Natural killer cell (primary cell): ENCODE measurements at regions of chr3 and their contacts with region 1.

Region 1: DNA sequence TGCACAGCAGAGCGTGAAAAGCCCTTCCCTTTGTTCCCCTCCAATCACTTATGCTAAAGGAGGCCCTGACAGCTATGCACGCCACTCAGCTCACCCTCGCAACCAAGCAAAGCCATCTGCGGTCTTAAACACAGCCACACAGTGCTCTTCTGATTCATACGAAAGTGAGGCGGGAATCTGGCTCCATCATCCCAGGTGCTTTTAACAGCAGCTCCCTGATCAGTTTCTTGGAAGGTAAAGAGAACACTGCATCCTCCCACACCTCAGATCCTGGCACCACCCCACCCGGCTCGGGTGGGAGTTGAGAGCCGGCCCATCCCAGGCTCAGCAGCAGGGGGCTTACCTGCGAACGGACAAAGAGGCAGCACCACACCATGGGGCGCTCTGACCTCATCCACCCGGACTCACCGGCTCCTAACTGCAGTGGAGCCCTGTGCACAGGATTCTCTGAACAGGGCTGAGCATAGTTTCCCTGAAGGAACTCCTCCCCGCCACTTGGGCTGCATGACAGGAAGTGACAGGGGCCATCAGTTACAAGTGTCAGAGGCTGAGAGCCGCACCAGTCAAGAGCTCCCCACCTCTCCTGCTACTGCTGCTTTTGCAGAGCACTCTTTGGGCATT is 114.3 kb upstream of the ARHGEF3 start:
- DNase-seq: peak; percentile 54 to 86
- ATAC-seq: peak; percentile 93 to 95 (median 93)
- H3K4me3 ChIP-seq: peak overlapping the region; percentile 60
- H3K4me3 Mint-ChIP-seq: peak overlapping the region; percentile 86
- H3K27ac ChIP-seq: peak overlapping the region; percentile 75
- H3K27ac Mint-ChIP-seq: peak overlapping the region; percentile 80 to 85
- H3K4me1 ChIP-seq: peaks cover 39% of the 10 kb centered on the region
- H3K4me1 Mint-ChIP-seq: peaks cover 46 to 57% of the 10 kb centered on the region in 2 donors
- H3K27me3 ChIP-seq: no peaks in the 10 kb centered on the region
- H3K27me3 Mint-ChIP-seq: no peaks in the 10 kb centered on the region
- CTCF ChIP-seq: no peak

Region 2: DNA sequence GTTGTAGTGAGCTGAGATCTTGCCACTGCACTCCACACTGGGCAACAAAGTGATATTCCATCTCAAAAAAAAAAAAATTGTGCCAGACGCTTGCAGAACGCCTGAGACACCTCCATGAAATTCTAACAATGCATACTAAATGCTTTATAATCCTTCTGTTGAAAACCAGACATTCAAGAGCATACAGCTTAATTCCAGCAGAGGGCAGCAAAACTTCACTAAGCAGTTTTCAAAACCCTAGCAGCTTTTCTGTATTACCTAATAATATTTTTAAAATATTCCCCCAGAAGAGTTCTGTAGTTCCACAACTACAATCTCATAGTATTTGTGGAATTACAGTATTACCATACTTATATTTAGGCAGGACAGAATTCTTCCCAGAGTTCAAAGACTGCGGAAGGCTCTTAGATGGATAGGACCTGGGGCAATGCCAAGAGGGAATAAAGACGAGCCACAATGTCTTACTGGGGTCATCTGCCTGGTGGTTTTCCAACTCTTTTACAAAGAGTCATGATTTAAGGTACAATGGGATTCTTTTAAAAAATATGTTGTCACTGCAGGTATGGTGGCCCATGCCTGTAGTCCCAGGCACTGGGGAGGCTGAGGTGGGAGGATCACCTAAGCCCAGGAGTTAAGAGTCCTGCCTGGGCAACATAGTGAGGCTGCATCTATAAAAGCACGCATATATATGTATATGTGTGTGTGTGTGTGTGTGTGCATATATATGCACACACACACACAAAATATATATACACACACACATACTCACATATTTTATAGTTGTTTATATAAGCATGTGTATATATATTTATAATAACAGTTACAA is 213.4 kb before region 1 on chr3:
- intact Hi-C with region 1: loop called (anchors 5 kb)
- DNase-seq: peak in 1 of 2 donors; percentile 89
- ATAC-seq: peak; percentile 77 to 83 (median 82)
- H3K4me3 ChIP-seq: no peak overlapping the region
- H3K4me3 Mint-ChIP-seq: no peak overlapping the region
- H3K27ac ChIP-seq: no peak overlapping the region
- H3K27ac Mint-ChIP-seq: peak overlapping the region in 1 of 2 donors; percentile 50
- H3K4me1 ChIP-seq: peaks cover 12% of the 10 kb centered on the region
- H3K4me1 Mint-ChIP-seq: peaks cover 16% of the 10 kb centered on the region in 2 donors
- H3K27me3 ChIP-seq: no peaks in the 10 kb centered on the region
- H3K27me3 Mint-ChIP-seq: no peaks in the 10 kb centered on the region
- CTCF ChIP-seq: peak; percentile 89

Region 3: DNA sequence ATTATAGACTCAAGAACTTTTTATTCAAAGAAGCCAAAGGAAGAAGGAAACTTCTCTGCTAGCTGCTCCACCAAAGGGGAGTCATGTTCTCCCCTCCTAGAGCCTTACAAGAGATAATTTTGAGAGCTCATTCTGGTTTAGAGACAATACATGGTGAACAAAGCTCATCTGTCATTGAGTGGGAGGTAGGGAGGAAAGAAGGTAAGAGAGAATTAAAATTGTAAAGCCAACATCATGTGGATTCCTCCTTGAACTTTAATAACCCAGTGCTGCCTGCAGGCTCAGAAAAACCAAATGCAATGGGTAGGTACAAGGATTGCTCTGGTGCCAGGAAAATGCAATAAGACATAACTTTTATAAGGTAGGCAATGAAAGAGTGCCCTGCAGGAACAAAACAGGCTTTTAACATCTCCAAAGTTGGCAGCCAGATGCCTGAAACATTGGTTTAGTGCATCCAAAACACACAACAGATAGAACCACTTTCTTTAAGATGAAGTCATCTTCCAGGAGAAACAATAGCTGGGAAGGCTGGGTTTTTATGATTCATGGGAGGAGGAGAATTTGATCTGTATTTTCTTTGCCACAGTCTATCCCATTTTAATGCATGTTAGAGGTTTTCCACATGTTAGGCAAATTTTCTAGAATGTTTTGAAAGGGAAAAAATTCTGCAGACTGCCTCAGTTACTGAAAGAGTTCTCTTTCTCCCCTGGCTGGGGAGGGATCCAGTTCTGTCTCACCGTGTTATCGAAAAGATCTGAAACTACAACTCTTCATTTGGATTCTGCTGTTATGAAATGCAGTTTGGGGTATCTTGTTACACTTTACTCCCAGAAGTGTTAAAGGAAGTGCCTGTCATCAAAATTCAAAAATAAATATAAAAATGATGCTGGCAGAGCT is 103.1 kb before region 1 on chr3:
- intact Hi-C with region 1: no loop called
- DNase-seq: no peak
- ATAC-seq: no peak
- H3K4me3 ChIP-seq: no peak overlapping the region
- H3K4me3 Mint-ChIP-seq: no peak overlapping the region
- H3K27ac ChIP-seq: no peak overlapping the region
- H3K27ac Mint-ChIP-seq: peak overlapping the region; percentile 48 to 69
- H3K4me1 ChIP-seq: peaks cover 6% of the 10 kb centered on the region
- H3K4me1 Mint-ChIP-seq: peaks cover 41 to 52% of the 10 kb centered on the region in 2 donors
- H3K27me3 ChIP-seq: no peaks in the 10 kb centered on the region
- H3K27me3 Mint-ChIP-seq: no peaks in the 10 kb centered on the region
- CTCF ChIP-seq: no peak

Region 4: GRCh38 chr3:56825567-56826438 is 90.3 kb before region 1 on chr3:
- intact Hi-C with region 1: no loop called
- DNase-seq: no peak
- ATAC-seq: no peak
- H3K4me3 ChIP-seq: no peak overlapping the region
- H3K4me3 Mint-ChIP-seq: no peak overlapping the region
- H3K27ac ChIP-seq: no peak overlapping the region
- H3K27ac Mint-ChIP-seq: no peak overlapping the region
- H3K4me1 ChIP-seq: peaks cover 2% of the 10 kb centered on the region
- H3K4me1 Mint-ChIP-seq: peaks cover 28 to 31% of the 10 kb centered on the region in 2 donors
- H3K27me3 ChIP-seq: no peaks in the 10 kb centered on the region
- H3K27me3 Mint-ChIP-seq: no peaks in the 10 kb centered on the region
- CTCF ChIP-seq: no peak

Region 5: GRCh38 chr3:56960234-56960917 is 44.3 kb after region 1 on chr3:
- intact Hi-C with region 1: loop called (anchors 10 kb)
- DNase-seq: no peak
- ATAC-seq: no peak
- H3K4me3 ChIP-seq: no peak overlapping the region
- H3K4me3 Mint-ChIP-seq: no peak overlapping the region
- H3K27ac ChIP-seq: no peak overlapping the region
- H3K27ac Mint-ChIP-seq: no peak overlapping the region
- H3K4me1 ChIP-seq: no peaks in the 10 kb centered on the region
- H3K4me1 Mint-ChIP-seq: no peaks in the 10 kb centered on the region
- H3K27me3 ChIP-seq: no peaks in the 10 kb centered on the region
- H3K27me3 Mint-ChIP-seq: no peaks in the 10 kb centered on the region
- CTCF ChIP-seq: no peak